ENCODE measurements at regions of chr13 and their contacts with region 1.

Region 1: DNA sequence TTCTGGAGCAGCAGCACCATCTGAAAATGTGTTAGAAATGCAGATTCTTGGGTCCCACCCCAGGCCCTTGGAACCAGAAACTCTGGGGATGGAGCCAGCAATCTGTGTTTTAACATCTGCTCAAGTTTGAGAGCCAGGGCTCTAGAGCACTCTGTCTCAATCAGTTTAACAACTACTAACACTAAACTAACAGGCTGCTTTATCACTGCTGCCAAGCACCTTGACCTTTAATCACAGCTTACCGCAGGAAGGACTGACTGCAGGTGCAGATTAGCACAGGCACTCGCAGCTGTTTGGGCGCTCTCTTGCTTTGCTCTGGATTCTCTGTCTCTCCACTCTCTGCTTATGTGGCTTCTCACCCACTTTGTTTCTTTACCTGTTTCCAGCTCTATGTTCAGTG is 163.5 kb downstream of the MTUS2 start:
- DNase-seq: no peak
- ATAC-seq: no peak
- H3K4me3 ChIP-seq: no peak overlapping the region
- H3K27ac ChIP-seq: peak overlapping the region in 1 of 2 donors; percentile 94
- H3K4me1 ChIP-seq: peaks cover 2 to 14% of the 10 kb centered on the region in 2 donors
- H3K27me3 ChIP-seq: no peaks in the 10 kb centered on the region

Region 2: DNA sequence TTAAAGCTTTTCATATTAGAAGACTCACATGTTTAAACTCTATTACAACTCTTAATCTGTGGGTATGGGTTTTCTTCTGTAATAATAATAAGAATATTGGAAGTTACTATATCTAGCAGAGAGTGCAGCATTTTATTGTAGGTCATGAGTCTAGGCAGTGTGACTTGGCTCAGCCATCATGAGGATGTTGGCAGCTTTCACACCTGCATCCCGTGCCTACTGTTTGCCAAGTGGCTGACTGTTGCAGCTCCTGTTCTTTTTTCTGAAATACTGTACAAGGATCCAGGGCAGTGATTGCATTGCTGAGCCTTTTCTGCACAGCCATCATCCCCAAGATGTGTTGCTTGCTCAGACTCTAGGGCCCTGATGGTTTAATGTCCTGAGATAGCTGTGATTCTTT is 116.1 kb before region 1 on chr13:
- intact Hi-C with region 1: loop called in 1 of 2 experiments (anchors 10 kb)
- DNase-seq: no peak
- ATAC-seq: no peak
- H3K4me3 ChIP-seq: no peak overlapping the region
- H3K27ac ChIP-seq: peak overlapping the region in 1 of 2 donors; percentile 54
- H3K4me1 ChIP-seq: peaks cover 4 to 7% of the 10 kb centered on the region in 2 donors
- H3K27me3 ChIP-seq: no peaks in the 10 kb centered on the region

Region 3: DNA sequence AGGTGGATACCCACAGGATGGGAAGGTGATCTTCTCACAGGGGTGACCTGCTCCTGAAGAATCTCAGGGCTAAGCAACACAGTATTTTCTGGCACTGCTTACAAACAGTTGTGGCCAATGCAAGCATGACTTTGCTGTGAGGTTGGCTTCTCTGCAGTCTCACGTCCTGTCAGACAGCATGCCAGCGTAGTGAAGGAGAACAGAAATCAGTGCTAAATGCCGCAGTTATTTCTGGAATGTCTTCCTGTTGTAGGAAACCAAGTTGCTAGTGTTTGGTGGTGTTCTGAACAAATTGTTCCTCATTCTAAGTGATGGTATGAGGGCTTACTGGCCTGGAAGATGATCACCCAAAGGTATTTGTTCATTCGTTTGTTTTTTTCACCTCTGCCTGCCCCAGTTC is 156.6 kb after region 1 on chr13:
- intact Hi-C with region 1: loop called (anchors 5 kb)
- DNase-seq: peak; percentile 62 to 75
- ATAC-seq: peak; percentile 72
- H3K4me3 ChIP-seq: no peak overlapping the region
- H3K27ac ChIP-seq: peak overlapping the region in 1 of 2 donors; percentile 85
- H3K4me1 ChIP-seq: peaks cover 0 to 3% of the 10 kb centered on the region in 2 donors
- H3K27me3 ChIP-seq: no peaks in the 10 kb centered on the region

Region 4: GRCh38 chr13:29196409-29197074 is 212.9 kb after region 1 on chr13:
- intact Hi-C with region 1: no loop called
- DNase-seq: no peak
- ATAC-seq: no peak
- H3K4me3 ChIP-seq: no peak overlapping the region
- H3K27ac ChIP-seq: no peak overlapping the region
- H3K4me1 ChIP-seq: peaks cover 0 to 2% of the 10 kb centered on the region in 2 donors
- H3K27me3 ChIP-seq: no peaks in the 10 kb centered on the region

Region 5: GRCh38 chr13:29227576-29227975 is 243.9 kb after region 1 on chr13:
- intact Hi-C with region 1: loop called in 1 of 2 experiments (anchors 10 kb)
- DNase-seq: no peak
- ATAC-seq: peak; percentile 62
- H3K4me3 ChIP-seq: no peak overlapping the region
- H3K27ac ChIP-seq: peak overlapping the region; percentile 30 to 86
- H3K4me1 ChIP-seq: peaks cover 0 to 2% of the 10 kb centered on the region in 2 donors
- H3K27me3 ChIP-seq: no peaks in the 10 kb centered on the region

Measured in aorta (tissue), 5 donors.